ENCODE measurements at regions of chr1 and their contacts with region 1.

Region 1: DNA sequence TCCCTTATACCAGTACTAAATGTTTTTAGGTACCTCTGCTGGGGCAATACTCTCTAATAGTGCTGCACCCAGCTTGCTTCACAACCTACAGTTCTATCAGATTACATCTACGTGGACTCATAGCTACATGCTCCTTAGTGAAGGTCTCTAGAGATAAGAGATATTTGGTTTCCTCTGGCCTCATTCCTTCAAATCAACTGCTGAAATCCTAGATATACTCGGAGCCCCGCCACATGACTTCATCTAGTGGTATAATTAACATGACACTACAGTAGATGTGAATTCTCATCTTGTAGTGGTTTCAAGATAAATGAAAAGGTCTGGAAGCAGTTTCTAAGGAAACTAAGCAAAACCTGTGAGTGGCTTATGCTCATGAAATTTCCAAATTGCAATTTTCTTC is 115.4 kb downstream of the SMYD2 start:
- DNase-seq: no peak
- ATAC-seq: no peak
- H3K4me3 ChIP-seq: no peak overlapping the region
- H3K27ac ChIP-seq: no peak overlapping the region
- H3K4me1 ChIP-seq: no peaks in the 10 kb centered on the region
- H3K27me3 ChIP-seq: no peaks in the 10 kb centered on the region
- CTCF ChIP-seq: no peak

Region 2: GRCh38 chr1:214579183-214579582 is 182.9 kb after region 1 on chr1:
- CTCF ChIA-PET with region 1: no interaction called
- POLR2A ChIA-PET with region 1: interaction called, 13 read pairs
- intact Hi-C with region 1: no loop called
- DNase-seq: no peak
- ATAC-seq: no peak
- H3K4me3 ChIP-seq: no peak overlapping the region
- H3K27ac ChIP-seq: no peak overlapping the region
- H3K4me1 ChIP-seq: peaks cover 45% of the 10 kb centered on the region
- H3K27me3 ChIP-seq: no peaks in the 10 kb centered on the region
- CTCF ChIP-seq: no peak

Measured in PC-3 (cell line).